CD4-positive, alpha-beta memory T cell (primary cell): ENCODE measurements at regions of chr12 and their contacts with region 1.

Region 1: DNA sequence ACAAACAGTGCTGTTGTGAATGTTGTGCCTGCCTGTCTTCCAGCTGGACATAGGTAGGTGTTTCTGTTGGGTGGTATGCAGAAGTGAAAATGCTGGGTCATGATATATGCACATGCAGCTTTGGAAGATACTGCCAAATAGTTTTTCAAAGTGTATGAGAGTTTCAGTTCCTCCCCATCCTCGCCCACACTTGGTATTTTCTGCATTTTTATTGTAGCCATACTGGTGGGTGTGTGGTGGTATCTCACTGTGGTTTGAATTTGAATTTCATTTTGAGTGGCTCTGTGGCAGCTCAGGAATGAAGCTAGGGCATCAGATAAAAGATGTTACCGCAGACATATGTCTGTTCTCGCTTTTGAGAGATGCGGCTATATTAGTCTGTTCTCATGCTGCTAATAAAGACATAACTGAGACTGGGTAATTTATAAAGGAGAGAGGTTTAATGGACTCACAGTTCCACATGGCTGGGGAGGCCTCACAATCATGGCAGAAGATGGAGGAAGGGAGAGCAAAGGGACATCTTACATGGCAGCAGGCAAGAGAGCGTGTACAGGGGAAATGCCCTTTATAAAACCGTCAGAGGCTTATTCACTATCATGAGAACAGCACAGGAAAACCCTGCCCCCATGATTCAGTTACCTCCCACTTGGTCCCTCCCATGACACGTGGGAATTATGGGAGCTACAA is 183.1 kb downstream of the CAND1 start:
- DNase-seq: no peak
- H3K4me3 ChIP-seq: no peak overlapping the region
- H3K4me3 Mint-ChIP-seq: peak overlapping the region in 4 of 8 donors; percentile 21 to 69 (median 66)
- H3K27ac ChIP-seq: no peak overlapping the region
- H3K27ac Mint-ChIP-seq: peak overlapping the region in 5 of 7 donors; percentile 3 to 69 (median 25)
- H3K4me1 ChIP-seq: peaks cover 40% of the 10 kb centered on the region
- H3K4me1 Mint-ChIP-seq: peaks cover 45 to 53% (median 48%) of the 10 kb centered on the region in 4 donors
- H3K27me3 ChIP-seq: no peaks in the 10 kb centered on the region
- H3K27me3 Mint-ChIP-seq: peaks cover 0 to 1% of the 10 kb centered on the region in 2 donors

Region 2: DNA sequence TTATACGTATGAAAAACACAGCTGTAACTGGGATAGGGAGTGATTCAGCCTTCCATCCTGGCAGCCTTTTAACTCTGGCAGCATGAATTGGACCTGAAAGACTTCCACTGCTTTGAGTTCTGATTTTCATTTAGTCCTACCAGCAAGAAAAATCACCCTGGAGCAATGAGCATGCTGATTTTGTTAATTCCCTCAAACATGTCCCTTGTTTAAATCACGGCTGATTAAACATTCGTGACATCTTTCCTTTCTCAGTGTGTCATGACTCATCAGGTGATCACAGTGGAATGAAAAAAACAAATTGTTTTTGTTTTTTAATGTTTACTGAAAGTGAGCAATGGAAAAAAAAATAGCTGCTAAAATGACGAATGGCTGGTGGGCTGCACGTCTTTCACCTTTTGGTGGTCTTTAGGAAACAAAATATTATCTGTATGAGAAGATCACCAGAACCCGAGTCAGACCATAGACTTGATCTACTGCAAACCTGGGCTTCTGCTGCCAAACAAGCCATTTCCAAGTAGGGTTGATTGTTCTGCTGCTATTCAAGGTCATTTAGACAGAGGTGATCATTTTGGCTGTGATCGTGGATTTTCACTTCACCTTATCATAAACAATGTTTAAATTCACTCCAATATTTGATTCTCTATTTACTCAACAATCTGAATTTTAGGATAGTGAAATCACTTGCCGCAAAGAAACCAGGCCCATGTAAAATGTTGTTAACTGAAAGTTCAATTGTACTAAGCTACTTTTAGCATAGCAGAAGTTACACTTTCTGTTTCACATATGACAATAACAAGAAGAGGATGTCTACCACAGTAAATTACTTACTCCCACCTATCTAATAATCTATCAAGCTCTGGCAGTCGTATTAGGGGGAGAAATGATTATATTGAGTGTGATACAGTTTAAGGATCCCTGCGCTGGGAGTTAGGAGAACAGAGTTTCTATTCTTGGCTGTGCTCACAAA is 249.9 kb before region 1 on chr12:
- CTCF ChIA-PET with region 1: no interaction called
- POLR2A ChIA-PET with region 1: no interaction called
- intact Hi-C with region 1: no loop called
- DNase-seq: no peak
- H3K4me3 ChIP-seq: no peak overlapping the region
- H3K4me3 Mint-ChIP-seq: no peak overlapping the region
- H3K27ac ChIP-seq: no peak overlapping the region
- H3K27ac Mint-ChIP-seq: no peak overlapping the region
- H3K4me1 ChIP-seq: no peaks in the 10 kb centered on the region
- H3K4me1 Mint-ChIP-seq: peaks cover 0 to 4% (median 0%) of the 10 kb centered on the region in 4 donors
- H3K27me3 ChIP-seq: no peaks in the 10 kb centered on the region
- H3K27me3 Mint-ChIP-seq: peaks cover 12 to 16% of the 10 kb centered on the region in 2 donors

Region 3: GRCh38 chr12:67441736-67442346 is 10.4 kb before region 1 on chr12:
- CTCF ChIA-PET with region 1: interaction called, 23 read pairs
- POLR2A ChIA-PET with region 1: interaction called, 4 read pairs
- intact Hi-C with region 1: no loop called
- DNase-seq: peak; percentile 68 to 79 (median 68)
- H3K4me3 ChIP-seq: no peak overlapping the region
- H3K4me3 Mint-ChIP-seq: peak overlapping the region; percentile 43 to 72 (median 68)
- H3K27ac ChIP-seq: no peak overlapping the region
- H3K27ac Mint-ChIP-seq: peak overlapping the region in 6 of 7 donors; percentile 10 to 86 (median 82)
- H3K4me1 ChIP-seq: peaks cover 12% of the 10 kb centered on the region
- H3K4me1 Mint-ChIP-seq: peaks cover 21 to 35% (median 27%) of the 10 kb centered on the region in 4 donors
- H3K27me3 ChIP-seq: no peaks in the 10 kb centered on the region
- H3K27me3 Mint-ChIP-seq: no peaks in the 10 kb centered on the region